K562 (cell line): ENCODE measurements at regions of chr17 and their contacts with region 1.

Region 1: GRCh38 chr17:40015005-40015997 is at the start of gene CSF3:
- DNase-seq: no peak
- ATAC-seq: no peak
- H3K4me3 ChIP-seq: no peak within 1 kb of the TSS
- H3K27ac ChIP-seq: no peak within 1 kb of the TSS
- H3K4me1 ChIP-seq: peaks cover 5 to 64% of the 10 kb centered on the region in 2 experiments; a peak in 3 of 5 replicates
- H3K27me3 ChIP-seq: no peaks in the 10 kb centered on the region
- CTCF ChIP-seq: no peak
- EP300 ChIP-seq: no peak
- POLR2A ChIP-seq: no peak
- RAD21 ChIP-seq: no peak
- polyA plus RNA-seq, gene CSF3: not detected

Region 2: GRCh38 chr17:39999067-39999466 is 16.2 kb before region 1 on chr17:
- CTCF ChIA-PET with region 1: no interaction called
- POLR2A ChIA-PET with region 1: interaction called, 13 read pairs
- in situ Hi-C with region 1: no loop called
- intact Hi-C with region 1: no loop called
- DNase-seq: no peak
- ATAC-seq: no peak
- H3K4me3 ChIP-seq: no peak overlapping the region
- H3K27ac ChIP-seq: no peak overlapping the region
- H3K4me1 ChIP-seq: peaks cover 0 to 3% of the 10 kb centered on the region in 2 experiments; a peak in 1 of 5 replicates
- H3K27me3 ChIP-seq: no peaks in the 10 kb centered on the region
- CTCF ChIP-seq: no peak
- EP300 ChIP-seq: no peak
- POLR2A ChIP-seq: no peak
- RAD21 ChIP-seq: no peak

Region 3: GRCh38 chr17:40191237-40192208 is 176.2 kb after region 1 on chr17:
- CTCF ChIA-PET with region 1: interaction called, 3 read pairs
- POLR2A ChIA-PET with region 1: no interaction called
- in situ Hi-C with region 1: no loop called
- intact Hi-C with region 1: loop called (anchors 5 kb)
- DNase-seq: peak; percentile 80 to 86 (median 84)
- ATAC-seq: peak; percentile 96
- H3K4me3 ChIP-seq: peak overlapping the region; percentile 46
- H3K27ac ChIP-seq: no peak overlapping the region
- H3K4me1 ChIP-seq: peaks cover 3 to 26% of the 10 kb centered on the region in 2 experiments; a peak in 3 of 5 replicates
- H3K27me3 ChIP-seq: no peaks in the 10 kb centered on the region
- CTCF ChIP-seq: peak; percentile 85 to 88 (median 87)
- EP300 ChIP-seq: 0 out of 2 replicates have a peak, but pooled peaks have one; percentile 16
- POLR2A ChIP-seq: no peak
- RAD21 ChIP-seq: peak; percentile 42 to 74; a peak in 3 of 4 replicates

Region 4: GRCh38 chr17:40516581-40517285 is 501.4 kb after region 1 on chr17:
- CTCF ChIA-PET with region 1: no interaction called
- POLR2A ChIA-PET with region 1: no interaction called
- in situ Hi-C with region 1: no loop called
- intact Hi-C with region 1: no loop called
- DNase-seq: peak; percentile 66 to 88 (median 72)
- ATAC-seq: peak; percentile 79
- H3K4me3 ChIP-seq: no peak overlapping the region
- H3K27ac ChIP-seq: peak overlapping the region; percentile 75
- H3K4me1 ChIP-seq: peaks cover 30 to 45% of the 10 kb centered on the region in 2 experiments
- H3K27me3 ChIP-seq: no peaks in the 10 kb centered on the region
- CTCF ChIP-seq: no peak
- EP300 ChIP-seq: peak; percentile 98
- POLR2A ChIP-seq: no peak
- RAD21 ChIP-seq: no peak